CD4-positive, alpha-beta T cell (primary cell): ENCODE measurements at regions of chr22 and their contacts with region 1.

Region 1: DNA sequence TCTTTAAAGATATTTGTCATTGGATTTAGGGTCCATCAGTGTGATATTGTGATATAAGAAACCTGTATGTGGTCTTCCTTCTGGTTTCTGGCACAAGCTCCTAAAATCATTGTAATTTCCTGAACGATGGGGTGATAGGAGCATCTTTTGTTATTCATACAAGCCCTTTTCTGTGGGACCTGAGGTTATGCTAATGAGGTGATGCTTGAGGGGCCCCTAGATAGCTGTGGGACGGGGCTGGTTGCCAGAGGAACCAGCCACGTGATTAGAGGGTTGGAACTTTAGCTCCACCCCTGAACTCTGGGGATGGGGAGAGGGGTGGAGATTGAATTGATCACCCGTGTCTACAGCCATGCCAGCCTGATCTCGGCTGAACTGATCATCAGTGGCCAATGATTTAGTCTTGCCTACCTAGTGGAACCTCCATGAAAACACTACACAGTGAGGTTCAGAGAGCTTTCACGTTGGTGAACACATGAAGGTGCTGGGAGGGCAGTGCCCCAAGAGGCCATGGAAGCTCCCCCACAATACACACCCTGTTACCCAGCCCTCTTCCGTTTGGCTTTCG is 62.8 kb downstream of the BCR start:
- DNase-seq: peak; percentile 45 to 90 (median 64)
- ATAC-seq: peak; percentile 94
- H3K4me3 ChIP-seq: peak overlapping the region; percentile 34
- H3K4me3 Mint-ChIP-seq: peak overlapping the region; percentile 70
- H3K27ac ChIP-seq: peak overlapping the region; percentile 48 to 78
- H3K27ac Mint-ChIP-seq: peak overlapping the region; percentile 91
- H3K4me1 ChIP-seq: peaks cover 91% of the 10 kb centered on the region
- H3K4me1 Mint-ChIP-seq: peaks cover 88% of the 10 kb centered on the region
- H3K27me3 ChIP-seq: no peaks in the 10 kb centered on the region
- H3K27me3 Mint-ChIP-seq: no peaks in the 10 kb centered on the region
- CTCF ChIP-seq: no peak

Region 2: GRCh38 chr22:23219822-23220484 is 23.1 kb before region 1 on chr22:
- CTCF ChIA-PET with region 1: no interaction called
- POLR2A ChIA-PET with region 1: interaction called, 27 read pairs
- intact Hi-C with region 1: no loop called
- DNase-seq: peak in 13 of 14 experiments; percentile 16 to 70 (median 46)
- ATAC-seq: peak; percentile 76
- H3K4me3 ChIP-seq: peak overlapping the region; percentile 42
- H3K4me3 Mint-ChIP-seq: peak overlapping the region; percentile 84
- H3K27ac ChIP-seq: peak overlapping the region; percentile 39 to 47
- H3K27ac Mint-ChIP-seq: peak overlapping the region; percentile 83
- H3K4me1 ChIP-seq: peaks cover 97% of the 10 kb centered on the region
- H3K4me1 Mint-ChIP-seq: peaks cover 95% of the 10 kb centered on the region
- H3K27me3 ChIP-seq: no peaks in the 10 kb centered on the region
- H3K27me3 Mint-ChIP-seq: no peaks in the 10 kb centered on the region
- CTCF ChIP-seq: no peak

Region 3: DNA sequence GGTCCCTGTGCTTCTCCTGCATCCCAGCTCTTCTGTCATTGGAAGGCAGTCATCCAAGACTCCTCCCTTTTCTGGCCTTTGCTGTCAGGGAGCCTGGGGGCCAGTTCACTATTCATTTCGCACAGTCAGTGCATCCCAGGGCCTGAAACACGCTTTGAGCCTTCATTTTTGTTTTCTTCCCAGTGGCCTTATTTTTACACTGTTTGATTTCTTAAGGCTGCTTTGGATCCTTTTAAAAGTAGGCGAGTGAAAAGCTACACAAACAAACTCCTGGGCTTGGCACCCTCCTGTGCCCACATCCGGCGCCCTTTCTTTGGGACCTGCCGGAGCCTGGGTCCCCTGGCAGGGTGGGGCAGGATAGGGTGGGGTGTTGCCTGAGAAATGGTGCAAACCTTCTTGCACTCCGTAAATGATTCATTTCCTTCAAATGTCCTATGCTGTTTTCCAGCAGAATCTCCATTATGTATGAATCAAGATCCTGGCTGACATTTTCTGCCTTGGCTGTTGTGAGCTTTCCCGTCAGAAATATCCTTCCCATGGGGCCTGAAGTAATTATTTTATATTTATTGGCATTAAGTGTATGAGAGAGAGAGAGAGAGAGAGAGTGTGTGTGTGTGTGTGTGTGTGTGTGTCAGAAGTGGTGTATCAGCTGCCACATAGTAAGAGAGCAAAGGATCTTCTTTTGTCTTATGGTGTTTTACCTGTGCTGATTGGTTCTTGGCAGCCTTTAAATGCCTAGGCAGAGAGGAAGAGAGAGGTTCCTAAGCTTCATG is 17.2 kb before region 1 on chr22:
- CTCF ChIA-PET with region 1: interaction called, 9 read pairs
- POLR2A ChIA-PET with region 1: interaction called, 27 read pairs
- intact Hi-C with region 1: loop called in 1 of 2 experiments (anchors 2 kb)
- DNase-seq: peak in 13 of 14 experiments; percentile 32 to 84 (median 60)
- ATAC-seq: peak; percentile 84
- H3K4me3 ChIP-seq: peak overlapping the region; percentile 1
- H3K4me3 Mint-ChIP-seq: peak overlapping the region; percentile 35
- H3K27ac ChIP-seq: peak overlapping the region; percentile 43 to 64
- H3K27ac Mint-ChIP-seq: peak overlapping the region; percentile 83
- H3K4me1 ChIP-seq: peaks cover 85% of the 10 kb centered on the region
- H3K4me1 Mint-ChIP-seq: peaks cover 84% of the 10 kb centered on the region
- H3K27me3 ChIP-seq: no peaks in the 10 kb centered on the region
- H3K27me3 Mint-ChIP-seq: no peaks in the 10 kb centered on the region
- CTCF ChIP-seq: no peak

Region 4: GRCh38 chr22:23270212-23270733 is 27.2 kb after region 1 on chr22:
- CTCF ChIA-PET with region 1: no interaction called
- POLR2A ChIA-PET with region 1: no interaction called
- intact Hi-C with region 1: no loop called
- DNase-seq: no peak
- ATAC-seq: no peak
- H3K4me3 ChIP-seq: no peak overlapping the region
- H3K4me3 Mint-ChIP-seq: no peak overlapping the region
- H3K27ac ChIP-seq: no peak overlapping the region
- H3K27ac Mint-ChIP-seq: peak overlapping the region; percentile 30
- H3K4me1 ChIP-seq: no peaks in the 10 kb centered on the region
- H3K4me1 Mint-ChIP-seq: no peaks in the 10 kb centered on the region
- H3K27me3 ChIP-seq: no peaks in the 10 kb centered on the region
- H3K27me3 Mint-ChIP-seq: no peaks in the 10 kb centered on the region
- CTCF ChIP-seq: no peak

Region 5: DNA sequence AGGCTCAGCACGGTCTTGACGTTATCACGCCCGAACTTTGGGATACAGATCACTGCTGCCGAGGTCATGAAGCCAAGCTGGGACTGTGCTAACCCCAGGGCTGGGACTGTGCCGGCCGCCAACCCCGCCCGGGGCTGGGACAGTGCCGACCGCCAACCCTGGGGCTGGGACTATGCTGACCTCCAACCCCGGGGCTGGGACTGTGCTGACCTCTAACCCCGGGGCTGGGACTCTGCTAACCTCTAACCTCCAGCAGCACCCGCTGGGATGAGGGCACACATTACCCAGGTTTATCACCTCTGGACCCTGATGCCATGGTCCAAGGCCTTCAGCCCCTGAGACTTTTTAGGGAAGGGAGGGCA is 207.3 kb after region 1 on chr22:
- CTCF ChIA-PET with region 1: no interaction called
- POLR2A ChIA-PET with region 1: no interaction called
- intact Hi-C with region 1: no loop called
- DNase-seq: no peak
- ATAC-seq: no peak
- H3K4me3 ChIP-seq: no peak overlapping the region
- H3K4me3 Mint-ChIP-seq: no peak overlapping the region
- H3K27ac ChIP-seq: no peak overlapping the region
- H3K27ac Mint-ChIP-seq: no peak overlapping the region
- H3K4me1 ChIP-seq: no peaks in the 10 kb centered on the region
- H3K4me1 Mint-ChIP-seq: no peaks in the 10 kb centered on the region
- H3K27me3 ChIP-seq: no peaks in the 10 kb centered on the region
- H3K27me3 Mint-ChIP-seq: peaks cover 13% of the 10 kb centered on the region
- CTCF ChIP-seq: no peak